GM12878 (cell line): ENCODE measurements at regions of chr22 and their contacts with region 1.

Region 1: DNA sequence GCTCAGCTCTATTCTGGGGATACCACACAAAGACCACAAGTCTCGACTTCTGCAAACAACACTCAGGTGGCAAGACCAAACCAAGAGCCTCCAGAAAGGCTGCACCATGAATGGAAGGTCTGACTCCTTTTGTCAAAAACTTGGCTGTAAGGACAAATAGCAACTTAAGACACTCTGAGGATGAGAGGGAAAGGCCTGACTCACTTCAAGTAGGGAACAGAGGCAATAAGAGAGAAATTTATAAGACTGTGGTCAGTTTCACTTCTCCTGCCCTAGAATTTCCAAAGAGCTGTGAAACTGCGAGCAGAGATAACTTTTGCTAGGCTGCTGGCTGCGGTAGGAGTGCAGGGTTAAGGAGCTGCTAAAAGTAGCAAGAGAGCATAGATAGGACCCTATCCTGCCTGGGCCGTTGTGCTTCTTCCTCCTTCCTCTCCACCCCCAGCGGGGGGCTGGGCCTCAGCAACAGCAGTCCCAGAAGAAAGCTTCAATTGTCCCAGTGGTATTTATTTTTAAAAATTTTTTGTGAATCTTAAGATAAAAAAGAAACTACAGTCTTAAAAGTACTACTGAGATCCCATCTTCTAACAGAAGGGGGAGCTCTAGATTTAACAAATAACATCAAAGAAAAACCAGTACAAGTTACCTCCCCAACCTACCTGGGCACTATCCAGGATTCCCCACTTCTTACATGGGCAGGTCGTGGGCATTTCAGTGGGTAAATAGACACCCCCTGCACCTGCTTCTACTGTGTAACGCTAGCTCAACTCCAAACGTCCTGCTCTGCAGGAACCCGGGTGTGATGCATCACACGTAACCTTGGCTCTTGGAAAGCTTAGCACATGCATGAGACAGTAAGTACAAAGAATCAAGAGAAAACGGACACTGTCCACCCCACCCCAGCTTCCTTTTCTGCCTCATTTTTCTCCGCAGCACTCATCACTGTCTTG is 66.4 kb downstream of the SGSM3 start:
- DNase-seq: peak; percentile 88
- ATAC-seq: peak; percentile 87
- H3K4me3 ChIP-seq: peak overlapping the region; percentile 50
- H3K27ac ChIP-seq: peak overlapping the region; percentile 84
- H3K4me1 ChIP-seq: peaks cover 72% of the 10 kb centered on the region
- H3K27me3 ChIP-seq: no peaks in the 10 kb centered on the region
- CTCF ChIP-seq: peak; percentile 45 to 52 (median 49); a peak in 5 of 6 replicates
- EP300 ChIP-seq: peak in 1 of 2 experiments; percentile 51; a peak in 3 of 4 replicates
- POLR2A ChIP-seq: no peak
- RAD21 ChIP-seq: peak; percentile 61

Region 2: DNA sequence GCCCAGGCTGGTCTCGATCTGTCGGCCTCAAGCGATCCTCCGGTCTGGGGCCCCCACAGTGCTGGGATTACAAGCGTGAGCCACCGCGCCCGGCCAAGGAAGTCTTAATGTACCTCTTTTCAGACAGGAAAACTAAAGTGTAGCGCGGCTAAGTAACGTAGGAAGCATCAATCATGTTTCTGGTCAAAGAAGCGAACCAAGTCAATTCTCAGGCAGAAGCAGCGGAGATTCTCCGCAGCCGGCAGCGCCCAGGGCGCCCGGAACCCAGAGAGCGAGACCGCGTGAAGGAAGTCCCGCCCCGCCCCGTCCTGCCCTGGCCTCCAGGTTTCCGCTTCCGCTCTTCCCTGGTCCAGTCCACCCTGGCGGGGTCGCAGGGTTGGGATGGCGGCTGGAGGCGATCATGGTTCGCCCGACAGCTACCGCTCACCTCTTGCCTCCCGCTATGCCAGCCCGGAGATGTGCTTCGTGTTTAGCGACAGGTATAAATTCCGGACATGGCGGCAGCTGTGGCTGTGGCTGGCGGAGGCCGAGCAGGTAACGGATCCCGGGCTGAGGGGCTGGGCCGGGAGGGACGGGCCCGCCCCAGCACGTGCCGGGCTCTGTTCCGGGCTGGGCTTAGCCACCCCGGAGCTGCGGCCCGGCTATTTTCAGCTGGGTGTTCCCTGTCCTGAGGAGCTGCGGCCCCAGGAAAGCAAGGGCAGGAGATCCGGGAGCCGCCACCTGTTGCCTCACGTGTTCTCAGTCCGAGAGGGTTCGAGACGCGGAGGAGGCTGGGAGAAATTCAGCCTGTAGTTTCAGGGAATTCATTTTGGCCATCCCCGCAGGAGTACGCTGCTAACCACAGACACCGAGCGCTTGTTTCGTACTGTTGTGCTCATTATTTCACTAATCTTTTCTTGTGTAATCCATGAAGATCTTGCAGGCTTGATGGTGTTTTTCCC is 90.3 kb before region 1 on chr22 and contains the start of gene ADSL:
- CTCF ChIA-PET with region 1: interaction called, 6 read pairs
- POLR2A ChIA-PET with region 1: no interaction called
- RAD21 ChIA-PET with region 1: interaction called, 4 read pairs
- SMC1A ChIA-PET with region 1: interaction called, 16 read pairs
- in situ Hi-C with region 1: no loop called
- intact Hi-C with region 1: no loop called
- DNase-seq: peak; percentile 41
- ATAC-seq: peak; percentile 95
- H3K4me3 ChIP-seq: peak within 1 kb of the TSS; percentile 81
- H3K27ac ChIP-seq: peak within 1 kb of the TSS; percentile 92
- H3K4me1 ChIP-seq: 0 out of 2 replicates have a peak, but pooled peaks cover 3% of the 10 kb centered on the region
- H3K27me3 ChIP-seq: no peaks in the 10 kb centered on the region
- CTCF ChIP-seq: no peak
- EP300 ChIP-seq: no peak
- POLR2A ChIP-seq: peak; percentile 99
- RAD21 ChIP-seq: no peak
- polyA plus RNA-seq, gene ADSL: 230 to 313 TPM

Region 3: DNA sequence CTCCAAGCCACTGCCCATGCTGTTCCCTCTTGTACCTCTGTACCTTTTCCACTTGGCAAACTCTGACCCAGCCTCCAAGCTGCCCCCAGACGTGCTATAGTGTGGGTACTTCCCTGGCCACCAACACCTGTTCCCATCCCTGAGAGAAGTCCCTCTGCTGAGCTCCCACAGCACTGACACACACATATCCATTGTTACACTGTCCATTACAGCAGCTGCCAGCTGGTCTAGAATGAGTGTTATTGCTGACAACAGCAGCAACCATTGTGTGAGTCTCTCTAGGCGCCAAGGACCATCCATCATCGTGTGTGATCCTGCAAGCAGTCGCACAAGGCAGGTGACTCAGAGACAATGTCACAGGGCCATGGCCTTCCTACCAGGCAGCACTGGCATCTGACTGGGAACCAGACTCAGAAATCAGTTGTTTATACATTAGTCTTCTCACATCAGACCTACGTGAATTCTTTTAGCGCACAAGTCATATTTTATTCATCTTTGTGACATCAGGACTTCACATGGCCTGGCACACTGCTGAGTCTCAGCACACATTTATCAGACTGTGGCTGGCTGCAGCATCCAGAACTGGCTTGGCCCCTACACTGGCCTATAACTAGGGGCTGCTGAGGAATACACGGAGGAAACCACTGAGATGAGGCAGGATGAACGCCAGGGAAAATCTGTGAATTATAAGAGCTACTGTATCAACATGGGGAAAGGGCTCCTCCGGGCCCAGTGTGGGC is 10.0 kb before region 1 on chr22:
- CTCF ChIA-PET with region 1: interaction called, 4 read pairs
- POLR2A ChIA-PET with region 1: no interaction called
- RAD21 ChIA-PET with region 1: no interaction called
- SMC1A ChIA-PET with region 1: interaction called, 14 read pairs
- in situ Hi-C with region 1: no loop called
- intact Hi-C with region 1: no loop called
- DNase-seq: no peak
- ATAC-seq: no peak
- H3K4me3 ChIP-seq: no peak overlapping the region
- H3K27ac ChIP-seq: no peak overlapping the region; the same call in 1 of the 2 replicates
- H3K4me1 ChIP-seq: no peaks in the 10 kb centered on the region
- H3K27me3 ChIP-seq: no peaks in the 10 kb centered on the region
- CTCF ChIP-seq: no peak
- EP300 ChIP-seq: no peak
- POLR2A ChIP-seq: 0 out of 2 replicates have a peak, but pooled peaks have one; percentile 36
- RAD21 ChIP-seq: no peak

Region 4: GRCh38 chr22:40473703-40474102 is 36.9 kb after region 1 on chr22:
- CTCF ChIA-PET with region 1: interaction called, 20 read pairs
- POLR2A ChIA-PET with region 1: interaction called, 3 read pairs
- RAD21 ChIA-PET with region 1: interaction called, 5 read pairs
- SMC1A ChIA-PET with region 1: interaction called, 25 read pairs
- in situ Hi-C with region 1: no loop called
- intact Hi-C with region 1: no loop called
- DNase-seq: no peak
- ATAC-seq: peak; percentile 67
- H3K4me3 ChIP-seq: no peak overlapping the region
- H3K27ac ChIP-seq: no peak overlapping the region
- H3K4me1 ChIP-seq: peaks cover 15% of the 10 kb centered on the region
- H3K27me3 ChIP-seq: no peaks in the 10 kb centered on the region
- CTCF ChIP-seq: no peak
- EP300 ChIP-seq: no peak
- POLR2A ChIP-seq: no peak
- RAD21 ChIP-seq: no peak

Region 5: DNA sequence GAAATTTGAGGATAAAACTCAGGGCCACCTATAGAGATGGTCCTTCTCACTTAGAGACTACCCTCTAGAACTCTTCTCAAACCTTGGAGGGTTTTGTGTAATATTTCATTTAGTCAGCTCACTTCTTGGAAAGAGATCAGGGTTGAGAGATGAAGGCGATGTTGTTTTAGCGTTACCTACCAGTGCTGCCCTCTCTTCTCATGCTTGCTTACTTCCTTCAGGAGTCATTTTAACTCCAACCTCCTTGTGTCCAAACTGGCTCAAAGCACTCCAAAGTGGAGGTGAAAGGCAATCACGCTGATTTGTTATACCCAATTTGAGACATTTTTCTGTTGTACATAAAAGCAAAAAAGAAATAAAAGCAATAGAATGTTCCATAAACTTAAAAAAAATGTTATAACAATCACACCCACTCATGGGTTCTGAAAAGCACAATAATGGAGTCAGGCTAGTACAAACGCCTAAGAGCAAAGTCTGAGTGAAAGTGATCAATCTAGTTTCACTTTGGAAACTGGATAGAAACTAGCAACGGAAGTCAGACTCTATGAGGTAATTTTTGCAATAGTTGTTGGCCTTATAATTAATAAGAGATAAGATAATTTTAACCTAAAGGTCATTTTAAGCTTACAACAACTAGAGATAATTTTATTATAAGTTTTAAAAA is 82.6 kb after region 1 on chr22:
- CTCF ChIA-PET with region 1: interaction called, 63 read pairs
- POLR2A ChIA-PET with region 1: no interaction called
- RAD21 ChIA-PET with region 1: interaction called, 70 read pairs
- SMC1A ChIA-PET with region 1: interaction called, 99 read pairs
- in situ Hi-C with region 1: no loop called
- intact Hi-C with region 1: no loop called
- DNase-seq: no peak
- ATAC-seq: peak; percentile 93
- H3K4me3 ChIP-seq: peak overlapping the region; percentile 48; the same call in 1 of the 2 replicates
- H3K27ac ChIP-seq: peak overlapping the region; percentile 83
- H3K4me1 ChIP-seq: peaks cover 18% of the 10 kb centered on the region
- H3K27me3 ChIP-seq: no peaks in the 10 kb centered on the region
- CTCF ChIP-seq: no peak
- EP300 ChIP-seq: no peak
- POLR2A ChIP-seq: no peak
- RAD21 ChIP-seq: no peak

Region 6: DNA sequence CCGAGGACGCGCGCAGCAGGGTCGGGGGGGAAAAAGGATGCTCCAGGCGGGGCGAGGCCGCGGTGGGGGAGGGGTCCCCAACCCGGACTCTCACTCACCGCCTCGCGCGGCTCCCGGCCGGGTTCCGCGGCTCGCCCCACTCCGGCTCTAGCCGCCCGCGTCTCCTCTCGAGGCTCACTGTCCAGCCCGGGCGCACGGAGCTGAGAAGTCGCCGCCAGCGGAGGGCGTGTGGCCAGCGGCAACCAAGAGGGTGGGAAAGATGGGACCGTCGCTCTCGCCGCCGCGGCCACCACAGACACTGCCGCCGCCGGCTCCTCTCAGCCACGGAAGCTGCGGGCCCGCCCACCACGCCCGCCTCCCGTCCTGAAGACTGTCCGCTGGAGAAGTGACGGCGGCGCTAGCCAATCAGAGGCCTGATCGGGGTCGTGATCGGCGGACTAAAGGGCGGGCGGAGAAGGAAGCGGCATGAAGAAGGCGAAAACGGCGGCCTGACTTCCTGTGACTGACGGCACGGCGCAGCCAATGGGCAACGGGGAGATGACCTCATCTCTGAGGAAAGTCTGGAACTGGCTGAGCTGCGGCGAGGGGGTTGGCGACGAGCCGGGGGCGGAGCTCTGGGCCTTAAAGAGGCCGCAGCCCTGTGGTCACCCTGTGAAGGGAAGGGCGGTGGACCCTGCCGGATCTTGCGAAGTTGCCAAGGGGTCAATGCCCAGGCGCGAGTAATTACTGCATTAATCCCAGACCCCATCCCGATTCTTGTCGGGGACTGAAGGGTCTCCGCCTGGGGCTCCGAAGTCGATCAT is 199.8 kb after region 1 on chr22 and contains the start of gene MRTFA:
- CTCF ChIA-PET with region 1: interaction called, 14 read pairs
- POLR2A ChIA-PET with region 1: interaction called, 4 read pairs
- RAD21 ChIA-PET with region 1: interaction called, 121 read pairs
- SMC1A ChIA-PET with region 1: interaction called, 31 read pairs
- in situ Hi-C with region 1: loop called (anchors 5 kb)
- intact Hi-C with region 1: no loop called
- DNase-seq: peak; percentile 99
- ATAC-seq: peak; percentile 95
- H3K4me3 ChIP-seq: peak within 1 kb of the TSS; percentile 85
- H3K27ac ChIP-seq: peak within 1 kb of the TSS; percentile 79
- H3K4me1 ChIP-seq: peaks cover 6% of the 10 kb centered on the region
- H3K27me3 ChIP-seq: no peaks in the 10 kb centered on the region
- CTCF ChIP-seq: 0 out of 6 replicates have a peak, but pooled peaks of 1 of the 3 experiments have one; percentile 0
- EP300 ChIP-seq: no peak
- POLR2A ChIP-seq: peak; percentile 99
- RAD21 ChIP-seq: no peak
- polyA plus RNA-seq, gene MRTFA: 2.0 to 2.6 TPM

Region 7: GRCh38 chr22:40898850-40899357 is 462.1 kb after region 1 on chr22:
- CTCF ChIA-PET with region 1: interaction called, 20 read pairs
- POLR2A ChIA-PET with region 1: no interaction called
- RAD21 ChIA-PET with region 1: interaction called, 28 read pairs
- SMC1A ChIA-PET with region 1: interaction called, 17 read pairs
- in situ Hi-C with region 1: no loop called
- intact Hi-C with region 1: loop called (anchors 10 kb)
- DNase-seq: peak; percentile 44
- ATAC-seq: peak; percentile 92
- H3K4me3 ChIP-seq: no peak overlapping the region
- H3K27ac ChIP-seq: no peak overlapping the region
- H3K4me1 ChIP-seq: no peaks in the 10 kb centered on the region
- H3K27me3 ChIP-seq: no peaks in the 10 kb centered on the region
- CTCF ChIP-seq: peak; percentile 48 to 68 (median 54); a peak in 5 of 6 replicates
- EP300 ChIP-seq: no peak
- POLR2A ChIP-seq: no peak
- RAD21 ChIP-seq: peak; percentile 77